HEK293T (cell line): ENCODE measurements at regions of chr14 and their contacts with region 1.

Region 1: DNA sequence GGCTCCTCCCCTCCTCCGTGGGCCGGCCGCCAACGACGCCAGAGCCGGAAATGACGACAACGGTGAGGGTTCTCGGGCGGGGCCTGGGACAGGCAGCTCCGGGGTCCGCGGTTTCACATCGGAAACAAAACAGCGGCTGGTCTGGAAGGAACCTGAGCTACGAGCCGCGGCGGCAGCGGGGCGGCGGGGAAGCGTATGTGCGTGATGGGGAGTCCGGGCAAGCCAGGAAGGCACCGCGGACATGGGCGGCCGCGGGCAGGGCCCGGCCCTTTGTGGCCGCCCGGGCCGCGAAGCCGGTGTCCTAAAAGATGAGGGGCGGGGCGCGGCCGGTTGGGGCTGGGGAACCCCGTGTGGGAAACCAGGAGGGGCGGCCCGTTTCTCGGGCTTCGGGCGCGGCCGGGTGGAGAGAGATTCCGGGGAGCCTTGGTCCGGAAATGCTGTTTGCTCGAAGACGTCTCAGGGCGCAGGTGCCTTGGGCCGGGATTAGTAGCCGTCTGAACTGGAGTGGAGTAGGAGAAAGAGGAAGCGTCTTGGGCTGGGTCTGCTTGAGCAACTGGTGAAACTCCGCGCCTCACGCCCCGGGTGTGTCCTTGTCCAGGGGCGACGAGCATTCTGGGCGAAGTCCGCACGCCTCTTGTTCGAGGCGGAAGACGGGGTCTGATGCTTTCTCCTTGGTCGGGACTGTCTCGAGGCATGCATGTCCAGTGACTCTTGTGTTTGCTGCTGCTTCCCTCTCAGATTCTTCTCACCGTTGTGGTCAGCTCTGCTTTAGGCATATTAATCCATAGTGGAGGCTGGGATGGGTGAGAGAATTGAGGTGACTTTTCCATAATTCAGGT is at the start of gene PSEN1:
- DNase-seq: peak; percentile 98

Region 2: DNA sequence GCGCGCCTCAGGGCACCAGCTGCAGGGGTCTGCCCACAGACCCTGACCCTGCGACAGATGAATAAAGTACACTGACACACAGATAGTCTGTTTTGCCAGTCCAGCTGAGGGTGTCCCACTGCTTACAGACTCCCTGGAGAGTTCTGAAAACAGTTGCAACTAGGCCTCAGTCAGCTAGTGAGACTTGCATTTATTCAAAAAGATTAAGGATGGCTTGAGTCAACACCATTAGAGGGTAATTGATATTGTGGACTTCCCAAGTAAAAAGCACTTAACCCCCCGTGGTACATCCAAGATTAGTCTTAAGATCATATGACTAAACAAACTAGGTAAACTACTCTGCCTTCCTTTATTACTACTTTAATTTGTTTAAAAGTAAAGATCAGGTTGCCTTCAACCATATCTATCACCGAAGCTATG is 11.4 kb before region 1 on chr14:
- CTCF ChIA-PET with region 1: no interaction called
- POLR2A ChIA-PET with region 1: interaction called, 33 read pairs
- DNase-seq: peak; percentile 44

Region 3: GRCh38 chr14:73149753-73150152 is 13.1 kb after region 1 on chr14:
- CTCF ChIA-PET with region 1: no interaction called
- POLR2A ChIA-PET with region 1: interaction called, 12 read pairs
- DNase-seq: no peak

Region 4: GRCh38 chr14:73173092-73173735 is 36.6 kb after region 1 on chr14:
- CTCF ChIA-PET with region 1: no interaction called
- POLR2A ChIA-PET with region 1: no interaction called
- DNase-seq: peak; percentile 19